GM10248 (cell line): ENCODE measurements at regions of chr20 and their contacts with region 1.

Region 1: DNA sequence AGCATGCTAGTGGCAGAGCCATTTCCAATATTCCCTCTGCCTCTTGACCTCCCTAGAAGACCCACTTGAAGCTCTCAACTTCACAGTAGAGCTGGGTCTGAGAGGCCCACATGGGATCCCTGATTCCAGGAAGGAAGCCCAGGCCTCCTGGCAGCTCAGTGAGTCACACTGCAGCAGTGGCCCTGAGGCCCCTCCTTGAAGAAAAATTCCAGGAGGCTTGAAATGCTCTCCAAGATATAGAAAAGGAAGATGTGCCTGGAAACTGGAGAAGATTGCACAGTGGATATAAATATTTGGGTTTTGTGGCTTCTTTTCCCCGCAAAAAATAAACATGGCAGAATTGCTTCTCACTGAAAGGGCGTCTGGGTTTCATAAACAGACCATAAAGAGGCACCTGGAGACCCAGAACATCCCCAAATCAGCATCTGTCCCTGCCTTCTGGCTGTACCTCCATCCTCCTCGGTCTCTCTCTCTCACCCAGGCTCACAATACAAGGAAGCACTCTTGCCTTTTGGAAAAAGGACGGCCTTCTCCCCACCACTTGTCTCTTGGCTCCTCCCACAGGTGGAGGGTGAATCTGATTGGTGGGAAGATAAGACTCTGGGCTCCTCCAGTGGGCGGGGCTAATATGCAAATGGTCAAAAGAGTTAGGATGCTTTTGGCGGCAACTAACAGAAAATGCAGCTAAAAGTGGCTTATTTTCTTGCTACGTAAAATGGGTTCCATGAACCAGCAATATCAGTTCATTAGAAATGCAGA is 200.0 kb upstream of the SULF2 start:
- DNase-seq: no peak
- CTCF ChIP-seq: no peak

Region 2: GRCh38 chr20:48002227-48002970 is 17.1 kb after region 1 on chr20:
- CTCF ChIA-PET with region 1: interaction called, 12 read pairs
- POLR2A ChIA-PET with region 1: no interaction called
- DNase-seq: peak; percentile 63
- CTCF ChIP-seq: no peak